Caco-2 (cell line): ENCODE measurements at regions of chr12 and their contacts with region 1.

Region 1: GRCh38 chr12:116599285-116600136 is 40.3 kb downstream of the MAP1LC3B2 start:
- DNase-seq: peak in 1 of 2 experiments; percentile 34
- H3K4me3 ChIP-seq: no peak overlapping the region
- H3K4me3 Mint-ChIP-seq: peak overlapping the region; percentile 8
- H3K27ac Mint-ChIP-seq: peak overlapping the region; percentile 22
- H3K4me1 ChIP-seq: peaks cover 22% of the 10 kb centered on the region
- H3K4me1 Mint-ChIP-seq: peaks cover 37% of the 10 kb centered on the region
- H3K27me3 ChIP-seq: no peaks in the 10 kb centered on the region
- H3K27me3 Mint-ChIP-seq: no peaks in the 10 kb centered on the region
- CTCF ChIP-seq: peak in 1 of 2 experiments; percentile 13

Region 2: GRCh38 chr12:116135209-116135930 is 464.1 kb before region 1 on chr12:
- CTCF ChIA-PET with region 1: interaction called, 10 read pairs
- POLR2A ChIA-PET with region 1: no interaction called
- intact Hi-C with region 1: no loop called
- DNase-seq: no peak
- H3K4me3 ChIP-seq: no peak overlapping the region
- H3K4me3 Mint-ChIP-seq: no peak overlapping the region
- H3K27ac Mint-ChIP-seq: no peak overlapping the region
- H3K4me1 ChIP-seq: no peaks in the 10 kb centered on the region; the same call in none of the 2 replicates
- H3K4me1 Mint-ChIP-seq: peaks cover 19% of the 10 kb centered on the region
- H3K27me3 ChIP-seq: no peaks in the 10 kb centered on the region
- H3K27me3 Mint-ChIP-seq: no peaks in the 10 kb centered on the region
- CTCF ChIP-seq: no peak

Region 3: DNA sequence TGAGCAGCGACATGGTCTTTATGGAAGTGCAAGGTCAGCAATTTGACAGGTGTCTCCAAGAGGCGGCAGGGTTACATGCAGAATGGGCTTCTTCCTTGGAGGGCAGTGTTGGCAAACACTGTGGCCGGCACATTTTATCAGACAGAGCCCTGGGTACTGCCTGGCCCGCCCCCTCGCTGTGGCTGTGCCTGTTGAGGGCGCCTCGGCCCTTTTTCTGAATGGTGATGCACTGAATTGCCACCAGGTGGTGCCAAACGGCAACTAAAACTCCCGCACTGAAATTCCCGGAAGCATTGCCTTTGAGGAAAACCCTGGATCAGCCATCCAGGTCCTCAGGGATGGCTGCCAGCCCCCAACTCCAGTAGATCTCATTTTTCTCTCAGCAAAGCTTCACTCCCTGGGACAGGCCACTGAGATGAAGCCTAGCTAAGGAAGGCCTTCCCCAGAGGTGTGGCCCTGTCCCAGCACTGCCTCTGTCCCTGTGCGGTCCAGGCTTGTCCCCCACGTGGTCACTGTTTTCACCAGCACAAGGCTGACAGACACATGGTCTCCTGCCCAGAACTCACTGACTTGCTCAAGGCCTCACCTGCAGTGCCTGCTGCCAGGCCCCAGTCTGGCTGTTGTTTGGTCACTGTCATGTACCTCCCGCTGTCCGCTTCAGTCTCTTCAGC is 426.1 kb after region 1 on chr12:
- CTCF ChIA-PET with region 1: no interaction called
- POLR2A ChIA-PET with region 1: no interaction called
- intact Hi-C with region 1: no loop called
- DNase-seq: peak; percentile 70 to 80
- H3K4me3 ChIP-seq: no peak overlapping the region
- H3K4me3 Mint-ChIP-seq: no peak overlapping the region
- H3K27ac Mint-ChIP-seq: peak overlapping the region; percentile 66
- H3K4me1 ChIP-seq: peaks cover 6% of the 10 kb centered on the region; the same call in 1 of the 2 replicates
- H3K4me1 Mint-ChIP-seq: no peaks in the 10 kb centered on the region
- H3K27me3 ChIP-seq: no peaks in the 10 kb centered on the region
- H3K27me3 Mint-ChIP-seq: no peaks in the 10 kb centered on the region
- CTCF ChIP-seq: peak; percentile 80 to 87